ENCODE measurements at regions of chr3 and their contacts with region 1.

Region 1: DNA sequence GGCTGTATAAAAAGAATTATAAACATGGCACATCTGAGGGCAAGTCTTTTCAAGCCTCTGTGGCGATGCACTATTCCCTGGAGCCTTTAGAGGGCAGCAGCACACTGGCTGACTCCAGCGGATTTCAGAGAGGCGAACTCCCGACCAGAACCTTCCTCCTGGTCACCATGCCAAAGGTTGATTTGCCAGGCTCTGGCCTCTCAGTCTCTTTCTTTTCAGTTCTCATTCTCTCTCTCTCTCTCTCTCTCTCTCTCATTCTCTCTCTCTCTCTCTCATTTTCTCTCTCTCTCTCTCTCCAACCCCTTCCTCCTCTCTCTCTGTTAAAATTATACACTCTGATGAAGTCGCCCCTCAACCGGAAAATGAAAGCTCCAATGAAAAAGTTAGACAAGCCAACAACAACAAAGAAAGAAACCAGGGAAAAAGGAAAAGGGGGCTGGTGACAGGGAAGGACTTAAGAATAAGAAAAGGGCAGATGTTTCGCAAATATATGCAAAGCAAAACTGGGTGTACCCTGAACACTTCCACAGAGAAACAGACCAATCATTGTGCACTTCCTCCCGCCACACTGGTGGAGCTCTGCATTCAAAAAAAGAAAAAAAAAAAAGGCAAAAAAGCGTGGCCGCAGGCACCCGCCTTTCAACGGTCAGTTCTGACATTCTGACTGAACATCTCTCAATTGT is 90.2 kb downstream of the TIGIT start:
- DNase-seq: peak; percentile 61
- ATAC-seq: peak; percentile 95
- H3K4me3 ChIP-seq: peak overlapping the region; percentile 3 to 37; a peak in 3 of 4 replicates
- H3K27ac ChIP-seq: no peak overlapping the region
- H3K4me1 ChIP-seq: no peaks in the 10 kb centered on the region
- H3K27me3 ChIP-seq: no peaks in the 10 kb centered on the region
- CTCF ChIP-seq: peak; percentile 98

Region 2: DNA sequence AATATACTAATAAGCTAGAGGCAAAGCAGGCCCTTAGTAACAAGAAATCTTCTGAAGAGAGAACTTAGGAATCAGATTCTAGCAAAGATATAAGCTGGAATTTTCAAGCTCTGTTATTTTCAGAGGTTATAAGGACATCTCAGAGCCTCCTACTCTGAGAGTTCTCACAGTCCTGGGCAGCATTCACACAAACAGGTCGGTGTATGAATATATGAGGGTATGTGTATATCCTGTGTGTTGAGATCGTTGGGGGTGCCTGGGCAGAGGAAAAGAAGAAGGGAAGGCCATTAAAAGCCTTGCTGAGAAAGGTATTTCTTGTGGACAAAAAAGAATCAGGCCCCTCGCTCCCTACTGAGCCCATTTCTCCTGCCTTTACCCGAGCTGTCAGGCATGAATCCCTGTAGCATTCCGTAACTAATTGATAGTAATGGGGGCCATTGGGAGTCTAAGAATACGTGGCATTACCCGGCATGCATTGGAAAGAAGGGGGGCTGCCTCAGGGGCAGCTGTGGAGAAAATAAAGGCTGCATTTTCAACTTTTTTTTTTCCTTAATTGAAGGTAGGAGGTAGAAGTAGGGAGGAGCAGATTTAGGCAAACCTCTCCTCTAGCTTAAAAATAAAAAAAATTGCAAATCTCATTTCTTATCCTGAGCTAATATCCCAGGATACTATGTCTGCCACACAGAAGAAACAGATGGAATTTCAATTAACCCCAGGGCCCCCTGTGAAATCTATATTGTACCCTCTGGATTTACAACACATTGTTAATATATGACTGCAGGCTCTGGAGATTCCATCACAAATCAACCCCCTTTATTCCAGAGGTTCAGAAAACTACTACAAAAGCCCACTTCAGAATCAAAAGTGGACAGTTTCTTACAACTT is 1289.4 kb before region 1 on chr3:
- CTCF ChIA-PET with region 1: interaction called, 10 read pairs
- POLR2A ChIA-PET with region 1: no interaction called
- in situ Hi-C with region 1: no loop called
- intact Hi-C with region 1: no loop called
- DNase-seq: no peak
- ATAC-seq: no peak
- H3K4me3 ChIP-seq: no peak overlapping the region
- H3K27ac ChIP-seq: no peak overlapping the region
- H3K4me1 ChIP-seq: no peaks in the 10 kb centered on the region
- H3K27me3 ChIP-seq: peaks cover 4% of the 10 kb centered on the region
- CTCF ChIP-seq: no peak

Region 3: GRCh38 chr3:114418724-114419543 is 34.9 kb after region 1 on chr3:
- CTCF ChIA-PET with region 1: interaction called, 3 read pairs
- POLR2A ChIA-PET with region 1: no interaction called
- in situ Hi-C with region 1: no loop called
- intact Hi-C with region 1: loop called (anchors 5 kb)
- DNase-seq: peak; percentile 45
- ATAC-seq: peak; percentile 94
- H3K4me3 ChIP-seq: no peak overlapping the region
- H3K27ac ChIP-seq: no peak overlapping the region
- H3K4me1 ChIP-seq: no peaks in the 10 kb centered on the region
- H3K27me3 ChIP-seq: no peaks in the 10 kb centered on the region
- CTCF ChIP-seq: peak; percentile 81; the same call in 1 of the 2 replicates

Region 4: GRCh38 chr3:114615523-114616085 is 231.6 kb after region 1 on chr3:
- CTCF ChIA-PET with region 1: interaction called, 10 read pairs
- POLR2A ChIA-PET with region 1: no interaction called
- in situ Hi-C with region 1: no loop called
- intact Hi-C with region 1: no loop called
- DNase-seq: no peak
- ATAC-seq: no peak
- H3K4me3 ChIP-seq: no peak overlapping the region
- H3K27ac ChIP-seq: no peak overlapping the region
- H3K4me1 ChIP-seq: no peaks in the 10 kb centered on the region
- H3K27me3 ChIP-seq: no peaks in the 10 kb centered on the region
- CTCF ChIP-seq: no peak

Region 5: DNA sequence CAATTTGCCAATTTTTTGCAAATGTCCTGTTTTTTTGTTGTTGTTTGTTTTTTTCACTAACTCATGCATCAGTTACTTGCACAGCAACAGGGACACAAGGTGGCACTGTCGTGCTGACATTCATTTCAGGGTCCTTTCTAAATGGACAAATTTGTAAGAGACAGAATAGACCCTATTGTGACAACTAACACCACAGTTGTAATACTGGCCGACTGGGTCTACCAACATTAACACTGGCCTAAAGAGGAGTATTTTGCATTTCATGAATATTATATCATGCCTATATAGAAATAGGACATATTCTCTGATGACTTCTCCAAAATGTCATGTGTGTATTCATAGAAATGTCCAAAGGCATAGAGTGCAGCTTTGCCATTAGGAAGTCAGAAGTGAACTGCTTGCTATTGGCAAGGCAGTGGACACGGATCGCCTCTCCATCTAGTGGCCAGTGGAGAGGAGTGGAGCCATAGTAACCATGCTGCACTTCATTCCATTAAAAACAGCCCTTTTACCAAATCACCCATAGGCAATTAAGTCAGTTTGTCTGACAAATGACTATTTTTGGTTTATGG is 708.3 kb after region 1 on chr3:
- CTCF ChIA-PET with region 1: no interaction called
- POLR2A ChIA-PET with region 1: no interaction called
- in situ Hi-C with region 1: no loop called
- intact Hi-C with region 1: loop called (anchors 5 kb)
- DNase-seq: peak; percentile 32
- ATAC-seq: peak; percentile 99
- H3K4me3 ChIP-seq: no peak overlapping the region
- H3K27ac ChIP-seq: no peak overlapping the region
- H3K4me1 ChIP-seq: no peaks in the 10 kb centered on the region
- H3K27me3 ChIP-seq: no peaks in the 10 kb centered on the region
- CTCF ChIP-seq: peak; percentile 85

Region 6: DNA sequence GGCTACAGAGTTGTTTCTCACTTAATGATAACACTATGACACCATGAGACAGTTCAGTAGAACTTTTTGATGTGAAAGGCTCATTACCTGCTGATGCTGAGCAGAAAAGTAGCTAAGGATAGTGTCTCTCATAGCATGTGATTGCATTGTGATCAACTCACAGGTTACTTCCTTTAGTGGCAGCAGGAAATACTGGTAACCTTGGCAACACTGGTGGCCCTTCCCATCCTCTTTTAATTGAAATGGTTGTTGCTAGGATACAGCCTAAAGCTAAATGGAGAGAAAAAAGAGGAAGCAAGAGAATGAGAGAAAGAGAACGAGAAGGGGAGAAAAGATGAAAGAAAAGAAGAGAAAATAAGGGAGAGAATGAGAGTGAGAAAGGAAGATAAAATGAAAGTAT is 1034.6 kb after region 1 on chr3:
- CTCF ChIA-PET with region 1: interaction called, 10 read pairs
- POLR2A ChIA-PET with region 1: no interaction called
- in situ Hi-C with region 1: no loop called
- intact Hi-C with region 1: no loop called
- DNase-seq: no peak
- ATAC-seq: no peak
- H3K4me3 ChIP-seq: no peak overlapping the region
- H3K27ac ChIP-seq: no peak overlapping the region
- H3K4me1 ChIP-seq: no peaks in the 10 kb centered on the region
- H3K27me3 ChIP-seq: no peaks in the 10 kb centered on the region
- CTCF ChIP-seq: no peak

Region 7: DNA sequence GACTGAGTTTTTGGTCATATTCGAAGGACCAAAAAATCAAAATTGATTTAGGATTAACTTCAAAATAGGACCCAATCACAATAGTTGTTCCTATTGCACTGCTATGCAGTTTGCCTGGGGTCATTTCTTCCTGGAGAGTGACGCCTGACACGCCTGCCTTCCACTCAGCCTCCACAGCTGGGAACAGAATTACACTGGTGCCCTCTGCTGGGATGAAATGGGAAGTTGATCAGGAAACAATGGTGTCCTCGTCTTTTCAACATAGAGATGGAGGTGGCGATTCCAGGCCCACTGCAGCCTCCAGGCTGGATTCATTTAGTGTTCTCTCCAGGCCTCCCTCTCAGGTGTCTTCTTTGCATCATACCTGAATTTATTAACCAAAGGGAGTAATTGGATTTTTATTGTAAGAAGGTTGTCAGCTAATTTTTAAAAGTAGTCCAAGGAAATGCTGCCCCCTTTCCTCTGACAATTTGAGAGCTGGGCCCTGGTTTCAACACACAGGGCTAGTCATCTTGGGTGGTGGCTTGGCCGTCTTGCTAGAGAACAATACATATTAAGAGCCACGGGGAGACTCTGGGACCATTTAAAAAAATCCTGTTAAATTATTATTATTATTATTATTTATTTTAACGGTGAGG is 1309.0 kb after region 1 on chr3:
- CTCF ChIA-PET with region 1: interaction called, 10 read pairs
- POLR2A ChIA-PET with region 1: no interaction called
- in situ Hi-C with region 1: no loop called
- intact Hi-C with region 1: no loop called
- DNase-seq: peak; percentile 59
- ATAC-seq: peak; percentile 97
- H3K4me3 ChIP-seq: no peak overlapping the region
- H3K27ac ChIP-seq: no peak overlapping the region
- H3K4me1 ChIP-seq: no peaks in the 10 kb centered on the region
- H3K27me3 ChIP-seq: no peaks in the 10 kb centered on the region
- CTCF ChIP-seq: peak; percentile 90